H1 (cell line): ENCODE measurements at regions of chr22 and their contacts with region 1.

Region 1: GRCh38 chr22:37088108-37088605 is 21.4 kb downstream of the TMPRSS6 start:
- DNase-seq: no peak
- H3K4me3 ChIP-seq: no peak overlapping the region
- H3K27ac ChIP-seq: no peak overlapping the region
- H3K4me1 ChIP-seq: peaks cover 0 to 7% (median 0%) of the 10 kb centered on the region in 4 experiments; a peak in 2 of 7 replicates
- H3K27me3 ChIP-seq: peaks cover 0 to 7% (median 1%) of the 10 kb centered on the region in 4 experiments; a peak in 3 of 7 replicates
- CTCF ChIP-seq: no peak
- EP300 ChIP-seq: no peak
- POLR2A ChIP-seq: no peak
- RAD21 ChIP-seq: no peak

Region 2: GRCh38 chr22:36901411-36902142 is 186.6 kb before region 1 on chr22:
- CTCF ChIA-PET with region 1: no interaction called
- POLR2A ChIA-PET with region 1: no interaction called
- DNase-seq: no peak
- H3K4me3 ChIP-seq: no peak overlapping the region
- H3K27ac ChIP-seq: 0 out of 2 replicates have a peak overlapping the region, but pooled peaks have one; percentile 6
- H3K4me1 ChIP-seq: peaks cover 11 to 17% (median 13%) of the 10 kb centered on the region in 4 experiments
- H3K27me3 ChIP-seq: peaks cover 0 to 6% (median 2%) of the 10 kb centered on the region in 4 experiments; a peak in 2 of 7 replicates
- CTCF ChIP-seq: no peak
- EP300 ChIP-seq: no peak
- POLR2A ChIP-seq: no peak
- RAD21 ChIP-seq: no peak

Region 3: GRCh38 chr22:37077884-37078485 is 10.2 kb before region 1 on chr22:
- CTCF ChIA-PET with region 1: interaction called, 24 read pairs
- POLR2A ChIA-PET with region 1: no interaction called
- DNase-seq: peak; percentile 29 to 96
- H3K4me3 ChIP-seq: no peak overlapping the region
- H3K27ac ChIP-seq: no peak overlapping the region
- H3K4me1 ChIP-seq: peaks cover 0 to 3% (median under 1%) of the 10 kb centered on the region in 4 experiments; a peak in 3 of 7 replicates
- H3K27me3 ChIP-seq: peaks cover 0 to 30% (median 13%) of the 10 kb centered on the region in 4 experiments; a peak in 5 of 7 replicates
- CTCF ChIP-seq: peak; percentile 90 to 99 (median 93)
- EP300 ChIP-seq: no peak
- POLR2A ChIP-seq: no peak
- RAD21 ChIP-seq: peak; percentile 70 to 81

Region 4: DNA sequence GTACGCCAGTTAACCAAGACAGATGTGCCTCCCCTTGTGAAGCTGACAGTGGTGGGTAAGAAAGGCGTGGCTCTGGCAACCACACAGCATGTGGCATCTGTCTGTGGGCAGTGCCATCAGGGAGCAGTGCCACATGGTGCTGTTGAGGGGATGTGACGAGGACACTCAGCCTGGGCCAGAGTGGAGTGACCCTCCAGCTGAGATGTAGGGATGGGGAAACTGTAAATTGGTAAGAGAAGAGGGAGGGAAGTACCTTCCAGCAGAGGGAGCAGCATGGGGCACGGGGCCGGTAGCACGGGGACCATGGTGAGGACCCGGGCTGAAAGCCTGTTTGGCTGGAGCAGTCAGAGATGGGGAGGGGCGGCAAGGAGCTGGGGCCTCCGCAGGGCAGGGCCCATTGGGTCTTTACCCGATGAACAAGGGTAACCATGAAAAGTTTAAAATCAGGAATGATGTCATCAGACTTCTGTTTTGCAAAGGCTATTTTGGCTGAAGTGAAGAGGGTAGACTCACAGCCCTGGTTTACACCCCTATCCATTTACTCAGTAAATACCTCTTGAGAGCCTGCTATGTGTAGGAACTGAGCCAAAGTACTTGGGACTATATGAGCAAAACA is 10.9 kb after region 1 on chr22:
- CTCF ChIA-PET with region 1: interaction called, 14 read pairs
- POLR2A ChIA-PET with region 1: no interaction called
- DNase-seq: peak in 1 of 2 experiments; percentile 59
- H3K4me3 ChIP-seq: no peak overlapping the region
- H3K27ac ChIP-seq: no peak overlapping the region
- H3K4me1 ChIP-seq: no peaks in the 10 kb centered on the region
- H3K27me3 ChIP-seq: peaks cover 0 to 8% (median 1%) of the 10 kb centered on the region in 4 experiments; a peak in 1 of 7 replicates
- CTCF ChIP-seq: peak; percentile 46 to 53 (median 47)
- EP300 ChIP-seq: no peak
- POLR2A ChIP-seq: no peak
- RAD21 ChIP-seq: peak; percentile 37 to 48